Common myeloid progenitor, CD34-positive (primary cell): ENCODE measurements at regions of chr7 and their contacts with region 1.

Region 1: GRCh38 chr7:142711746-142712619 is 37.3 kb upstream of the PRSS1 start:
- DNase-seq: peak; percentile 52 to 87 (median 56)
- H3K4me3 ChIP-seq: peak overlapping the region in 1 of 7 experiments; percentile 54
- H3K27ac ChIP-seq: peak overlapping the region in 1 of 2 experiments; percentile 74
- H3K4me1 ChIP-seq: peaks cover 50 to 91% (median 82%) of the 10 kb centered on the region in 4 experiments
- H3K27me3 ChIP-seq: no peaks in the 10 kb centered on the region

Region 2: GRCh38 chr7:142595816-142596516 is 116.0 kb before region 1 on chr7:
- CTCF ChIA-PET with region 1: no interaction called
- POLR2A ChIA-PET with region 1: no interaction called
- DNase-seq: no peak
- H3K4me3 ChIP-seq: no peak overlapping the region
- H3K27ac ChIP-seq: no peak overlapping the region
- H3K4me1 ChIP-seq: peaks cover 8 to 34% (median 28%) of the 10 kb centered on the region in 4 experiments
- H3K27me3 ChIP-seq: no peaks in the 10 kb centered on the region

Region 3: DNA sequence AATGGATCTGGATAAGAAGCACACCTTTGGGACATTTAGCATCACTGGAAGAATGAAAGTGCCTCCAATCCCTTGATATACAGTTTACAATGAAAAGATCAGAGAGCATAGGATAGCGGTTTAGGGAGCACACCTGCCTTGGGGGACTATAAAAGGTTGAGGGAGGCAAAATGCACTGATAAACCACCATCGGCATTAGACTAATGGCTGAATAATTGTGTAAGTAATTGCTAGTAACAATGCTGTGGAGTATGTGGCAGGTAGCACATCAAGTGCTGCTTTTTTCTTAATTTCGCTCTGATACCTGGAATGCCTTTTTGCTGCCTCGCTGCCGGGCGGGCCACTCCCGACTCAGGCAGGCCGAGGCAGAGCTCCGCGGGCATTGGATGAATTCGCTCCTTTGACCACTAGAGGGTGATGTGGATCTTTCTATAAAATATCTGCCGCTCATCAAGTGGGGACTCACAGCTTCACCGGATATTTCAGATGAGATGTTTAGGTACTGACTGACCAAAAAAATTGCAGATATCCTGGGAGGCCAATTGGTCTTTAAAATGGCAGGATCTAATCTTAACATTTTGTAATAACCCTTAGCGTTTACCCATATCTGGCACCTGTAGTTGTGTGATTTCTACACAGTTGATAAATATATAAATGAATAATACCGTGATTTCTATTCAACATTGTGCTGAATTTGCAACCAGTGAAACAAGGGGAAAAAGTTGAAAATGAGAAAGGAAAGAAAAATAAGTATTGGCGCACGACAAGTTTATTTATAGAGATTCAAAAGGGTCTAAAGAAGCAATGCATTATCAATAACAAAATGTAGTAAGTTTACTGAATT is 79.5 kb before region 1 on chr7:
- CTCF ChIA-PET with region 1: interaction called, 21 read pairs
- POLR2A ChIA-PET with region 1: interaction called, 4 read pairs
- DNase-seq: peak; percentile 81 to 88 (median 87)
- H3K4me3 ChIP-seq: peak overlapping the region in 1 of 7 experiments; percentile 11
- H3K27ac ChIP-seq: no peak overlapping the region
- H3K4me1 ChIP-seq: peaks cover 0 to 25% (median 13%) of the 10 kb centered on the region in 4 experiments
- H3K27me3 ChIP-seq: no peaks in the 10 kb centered on the region

Region 4: DNA sequence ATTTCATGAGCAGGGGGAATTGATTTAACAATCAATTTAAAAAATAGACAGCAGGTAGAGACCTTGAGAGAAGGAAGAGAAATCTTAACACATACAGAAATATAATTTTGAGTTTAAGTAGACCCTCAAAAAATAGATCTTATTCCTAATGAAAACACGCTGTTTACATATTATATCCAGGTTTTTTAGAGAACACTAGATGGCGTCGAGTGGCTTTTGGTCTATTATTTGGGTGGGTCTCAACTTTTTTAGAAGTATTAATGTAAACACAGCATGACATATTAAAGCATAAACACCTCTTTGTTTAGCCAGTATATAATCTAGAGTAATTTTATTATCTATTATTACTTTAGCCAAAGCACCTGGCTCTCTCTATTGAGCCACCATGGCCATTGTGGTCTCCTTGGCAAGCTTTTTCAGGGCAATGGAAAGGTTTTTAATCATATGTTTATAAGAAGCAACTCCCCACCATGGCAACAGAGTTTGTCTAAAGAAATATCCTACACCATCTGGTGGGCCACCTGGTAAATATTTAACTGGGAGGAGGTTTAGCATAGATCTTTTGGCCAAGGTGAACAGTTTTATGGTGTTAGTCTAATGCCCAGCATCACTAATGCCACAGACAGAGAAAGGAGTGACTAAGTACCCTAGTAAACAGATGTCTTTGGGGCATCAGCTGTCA is 22.4 kb before region 1 on chr7:
- CTCF ChIA-PET with region 1: interaction called, 23 read pairs
- POLR2A ChIA-PET with region 1: no interaction called
- DNase-seq: peak in 2 of 3 donors; percentile 58 to 78
- H3K4me3 ChIP-seq: no peak overlapping the region
- H3K27ac ChIP-seq: peak overlapping the region in 1 of 2 experiments; percentile 34
- H3K4me1 ChIP-seq: peaks cover 0 to 21% (median 18%) of the 10 kb centered on the region in 4 experiments
- H3K27me3 ChIP-seq: no peaks in the 10 kb centered on the region

Region 5: DNA sequence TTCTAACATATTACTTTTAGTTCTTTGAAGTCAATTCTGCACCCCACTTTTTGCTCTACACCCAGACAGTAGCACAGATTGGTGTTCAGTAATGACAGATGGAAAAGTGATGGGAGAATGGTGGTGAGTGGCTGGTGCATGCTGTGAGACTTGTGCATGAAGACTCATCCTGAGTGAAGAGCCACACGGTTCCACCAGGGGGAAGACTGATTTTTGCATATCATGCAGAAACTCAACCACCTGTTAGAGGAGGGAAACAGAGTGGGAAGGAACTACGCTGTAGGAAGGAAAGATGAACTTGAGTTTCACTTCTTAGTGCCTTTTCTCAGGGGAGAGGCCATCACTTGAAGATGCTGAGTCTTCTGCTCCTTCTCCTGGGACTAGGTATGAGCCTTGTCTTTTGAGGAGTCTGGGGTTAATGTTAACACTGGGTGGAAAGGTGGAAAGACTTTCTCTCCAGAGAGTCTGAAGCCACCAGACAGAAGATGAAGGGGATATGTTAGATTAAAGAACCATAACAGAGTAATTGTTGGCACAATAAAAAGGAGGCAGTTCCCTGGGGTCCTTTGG is 28.0 kb after region 1 on chr7:
- CTCF ChIA-PET with region 1: interaction called, 13 read pairs
- POLR2A ChIA-PET with region 1: interaction called, 4 read pairs
- DNase-seq: peak; percentile 42 to 70 (median 63)
- H3K4me3 ChIP-seq: no peak overlapping the region
- H3K27ac ChIP-seq: no peak overlapping the region
- H3K4me1 ChIP-seq: peaks cover 6 to 25% (median 14%) of the 10 kb centered on the region in 4 experiments
- H3K27me3 ChIP-seq: no peaks in the 10 kb centered on the region

Region 6: DNA sequence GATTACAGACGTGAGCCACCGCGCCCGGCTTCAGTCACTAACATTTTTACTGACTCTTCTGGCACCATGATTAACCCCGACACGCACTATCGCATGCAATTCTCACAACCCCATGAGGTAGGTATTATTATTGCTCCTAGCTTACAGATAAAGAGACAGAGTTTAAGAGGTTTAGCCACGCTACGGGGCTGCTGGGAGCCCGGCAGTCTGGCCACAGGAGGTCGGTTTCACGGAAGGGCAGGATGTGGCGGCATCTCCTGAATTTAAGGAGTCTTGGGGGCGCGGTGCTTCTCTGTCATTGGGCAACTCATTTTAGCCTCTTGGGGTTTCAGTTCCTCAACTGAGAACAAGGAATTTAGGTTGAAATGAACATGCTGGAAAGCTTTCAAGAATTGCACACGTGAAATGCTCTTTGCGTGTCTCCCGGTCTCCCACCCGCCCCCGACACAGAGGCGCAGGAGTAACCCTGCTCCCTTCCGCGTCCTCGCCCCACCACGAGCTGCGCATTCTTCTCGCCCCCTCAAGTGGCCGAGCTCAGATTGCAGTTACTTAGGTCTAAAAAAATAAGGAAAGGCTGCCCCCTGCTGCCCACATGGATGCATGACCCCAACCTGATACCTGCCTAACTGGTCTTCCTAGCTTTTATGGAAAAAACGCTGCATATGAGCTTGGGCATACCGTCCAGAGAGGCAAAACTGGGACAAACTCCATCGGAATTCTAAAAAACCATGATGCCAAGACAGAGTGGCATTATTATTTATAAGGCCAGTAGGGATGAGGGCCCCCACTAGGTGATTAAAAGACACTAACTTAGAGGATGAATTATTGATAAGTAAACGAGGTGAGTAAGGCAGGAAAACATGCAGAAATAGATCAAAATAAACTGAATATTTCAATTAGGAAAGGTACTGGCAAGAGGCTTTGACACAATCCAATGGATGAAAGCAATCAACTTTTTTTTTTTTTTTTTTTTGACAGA is 71.2 kb after region 1 on chr7:
- CTCF ChIA-PET with region 1: interaction called, 93 read pairs
- POLR2A ChIA-PET with region 1: interaction called, 7 read pairs
- DNase-seq: peak; percentile 95 to 98 (median 96)
- H3K4me3 ChIP-seq: peak overlapping the region in 6 of 7 experiments; percentile 3 to 69 (median 56)
- H3K27ac ChIP-seq: peak overlapping the region in 1 of 2 experiments; percentile 49
- H3K4me1 ChIP-seq: peaks cover 0 to 22% (median 13%) of the 10 kb centered on the region in 4 experiments
- H3K27me3 ChIP-seq: no peaks in the 10 kb centered on the region